PC-9 (cell line): ENCODE measurements at regions of chr17 and their contacts with region 1.

Region 1: GRCh38 chr17:77280980-77281903 is 140.5 kb downstream of the SEC14L1 start:
- DNase-seq: peak; percentile 36 to 70
- H3K4me3 ChIP-seq: peak overlapping the region; percentile 90
- H3K27ac ChIP-seq: peak overlapping the region; percentile 65
- H3K4me1 ChIP-seq: peaks cover 49% of the 10 kb centered on the region
- H3K27me3 ChIP-seq: no peaks in the 10 kb centered on the region
- CTCF ChIP-seq: no peak

Region 2: GRCh38 chr17:77269696-77270681 is 11.3 kb before region 1 on chr17:
- CTCF ChIA-PET with region 1: interaction called, 5 read pairs
- POLR2A ChIA-PET with region 1: interaction called, 5 read pairs
- intact Hi-C with region 1: loop called (anchors 1 kb)
- DNase-seq: peak; percentile 76 to 85
- H3K4me3 ChIP-seq: peak overlapping the region; percentile 27; the same call in 1 of the 2 replicates
- H3K27ac ChIP-seq: peak overlapping the region; percentile 67
- H3K4me1 ChIP-seq: peaks cover 26% of the 10 kb centered on the region
- H3K27me3 ChIP-seq: no peaks in the 10 kb centered on the region
- CTCF ChIP-seq: no peak